ENCODE measurements at regions of chr1 and their contacts with region 1.

Region 1: DNA sequence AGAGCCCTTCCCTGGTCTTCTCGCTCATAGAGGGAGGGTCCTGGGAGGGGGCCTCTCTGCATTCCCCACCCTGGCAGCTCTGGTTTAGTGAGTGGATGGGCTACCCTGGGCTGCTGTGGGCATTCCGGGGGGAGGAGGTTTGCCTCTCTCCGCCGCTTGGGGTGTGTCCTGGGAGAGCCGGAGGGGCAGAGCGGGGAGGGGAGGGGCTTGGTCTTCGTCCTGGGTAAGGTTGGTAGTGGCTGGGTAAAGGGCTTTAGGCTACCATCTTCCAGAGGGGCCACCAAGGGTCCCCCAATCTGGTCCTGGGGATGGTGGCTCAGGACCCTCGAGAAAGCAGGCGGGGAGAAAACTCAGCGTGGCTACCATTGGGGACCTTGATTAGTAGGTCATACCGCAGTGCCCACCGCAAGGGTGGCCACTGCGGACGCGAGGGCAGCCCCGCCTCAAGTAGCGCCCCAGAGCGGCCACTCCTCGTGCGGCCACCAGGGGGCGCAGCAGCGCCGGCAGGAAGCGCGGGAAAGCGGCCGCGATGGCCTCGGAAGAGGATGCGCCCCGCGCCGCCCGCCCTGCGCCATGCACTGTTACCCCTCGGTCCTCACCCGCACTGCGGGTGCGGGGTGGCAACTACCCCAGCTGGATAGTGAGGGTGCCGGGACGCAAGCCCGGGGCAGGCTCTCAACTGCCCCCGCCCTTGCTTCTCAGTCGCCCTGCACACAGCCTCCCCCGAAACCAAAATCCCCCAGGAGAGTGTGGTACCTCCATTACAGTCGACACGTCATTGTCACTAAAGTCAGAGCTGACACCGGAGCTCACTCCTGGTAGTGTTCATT is 44.1 kb upstream of the SLC25A33 start:
- DNase-seq: peak; percentile 92
- H3K4me3 Mint-ChIP-seq: peak overlapping the region; percentile 77
- H3K27ac Mint-ChIP-seq: no peak overlapping the region
- H3K4me1 Mint-ChIP-seq: peaks cover 10% of the 10 kb centered on the region
- H3K27me3 Mint-ChIP-seq: peaks cover 11% of the 10 kb centered on the region

Region 2: DNA sequence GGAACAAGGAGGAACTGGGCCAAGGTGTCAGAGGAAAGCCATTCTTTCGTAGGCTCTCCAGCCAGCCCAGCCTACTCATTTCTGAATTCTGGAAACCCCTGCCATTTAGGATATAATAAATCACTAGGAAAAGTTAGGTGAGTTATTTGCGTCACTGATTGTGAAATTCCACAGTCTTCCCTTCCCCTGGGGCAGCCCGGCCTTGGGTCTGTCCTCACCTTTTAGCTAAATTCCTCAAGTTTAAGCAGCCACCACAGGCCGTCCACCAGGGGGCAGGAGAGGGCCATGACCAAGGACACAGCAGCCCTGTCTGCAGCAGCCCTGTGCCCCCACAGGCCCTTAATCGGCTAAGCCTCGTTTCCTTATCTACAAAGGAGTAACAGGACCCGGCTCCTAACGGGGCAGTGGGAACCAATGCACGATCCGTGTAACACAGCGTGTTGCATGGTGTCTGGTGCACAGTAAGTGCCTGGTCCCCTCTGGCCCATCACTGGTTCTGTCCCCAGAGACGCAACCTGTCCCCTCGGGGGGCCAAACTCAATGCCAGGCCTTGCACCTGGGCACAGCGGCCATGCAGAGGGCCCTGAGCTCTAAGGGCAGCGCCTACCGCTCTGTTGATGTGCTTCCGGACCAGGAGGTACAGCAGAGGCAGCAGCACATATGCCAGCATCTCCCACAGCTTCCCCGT is 384.3 kb before region 1 on chr1:
- intact Hi-C with region 1: loop called (anchors 2 kb)
- DNase-seq: peak; percentile 95
- H3K4me3 Mint-ChIP-seq: no peak overlapping the region
- H3K27ac Mint-ChIP-seq: no peak overlapping the region
- H3K4me1 Mint-ChIP-seq: peaks cover 18% of the 10 kb centered on the region
- H3K27me3 Mint-ChIP-seq: no peaks in the 10 kb centered on the region

Region 3: GRCh38 chr1:9269078-9269501 is 226.1 kb before region 1 on chr1:
- intact Hi-C with region 1: loop called (anchors 1 kb)
- DNase-seq: no peak
- H3K4me3 Mint-ChIP-seq: no peak overlapping the region
- H3K27ac Mint-ChIP-seq: no peak overlapping the region
- H3K4me1 Mint-ChIP-seq: peaks cover 10% of the 10 kb centered on the region
- H3K27me3 Mint-ChIP-seq: no peaks in the 10 kb centered on the region

Region 4: DNA sequence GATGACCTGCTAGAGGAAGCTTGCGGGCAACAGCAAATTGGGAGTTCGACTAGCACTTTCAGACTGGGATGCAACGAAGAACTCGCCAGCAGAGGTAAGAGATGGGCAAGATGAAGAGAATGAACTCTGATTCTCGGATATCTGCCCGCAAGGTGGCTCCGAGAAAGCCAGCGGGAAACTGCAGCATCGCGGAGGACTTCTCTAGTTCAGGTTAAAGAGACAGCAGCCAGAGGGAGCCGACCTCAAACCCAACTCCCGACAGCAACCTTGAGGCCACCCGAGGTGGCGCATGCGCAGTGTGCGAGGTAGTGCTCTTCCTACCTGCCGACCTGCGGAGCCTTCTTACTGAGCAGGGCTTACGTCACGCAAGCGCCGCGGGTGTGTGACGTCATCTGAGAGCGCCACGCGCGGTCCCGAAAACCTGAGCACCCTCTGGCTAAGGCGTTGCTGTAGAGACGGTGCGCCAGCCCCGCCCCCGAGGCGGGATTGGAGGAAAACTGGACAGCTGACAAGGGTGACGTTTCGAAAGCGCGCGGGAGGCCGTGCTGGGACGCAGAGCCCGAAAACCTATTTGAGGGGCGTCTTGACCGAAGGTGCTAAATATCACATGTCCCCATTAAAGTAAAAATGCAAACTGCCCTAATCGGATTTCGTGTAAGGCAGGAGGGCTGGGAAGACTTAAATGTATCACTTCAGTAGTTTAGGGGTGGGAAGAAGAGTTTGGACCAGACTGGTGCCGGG is 66.4 kb before region 1 on chr1:
- intact Hi-C with region 1: no loop called
- DNase-seq: peak; percentile 100
- H3K4me3 Mint-ChIP-seq: peak overlapping the region; percentile 97
- H3K27ac Mint-ChIP-seq: peak overlapping the region; percentile 97
- H3K4me1 Mint-ChIP-seq: peaks cover 45% of the 10 kb centered on the region
- H3K27me3 Mint-ChIP-seq: peaks cover 13% of the 10 kb centered on the region

Region 5: DNA sequence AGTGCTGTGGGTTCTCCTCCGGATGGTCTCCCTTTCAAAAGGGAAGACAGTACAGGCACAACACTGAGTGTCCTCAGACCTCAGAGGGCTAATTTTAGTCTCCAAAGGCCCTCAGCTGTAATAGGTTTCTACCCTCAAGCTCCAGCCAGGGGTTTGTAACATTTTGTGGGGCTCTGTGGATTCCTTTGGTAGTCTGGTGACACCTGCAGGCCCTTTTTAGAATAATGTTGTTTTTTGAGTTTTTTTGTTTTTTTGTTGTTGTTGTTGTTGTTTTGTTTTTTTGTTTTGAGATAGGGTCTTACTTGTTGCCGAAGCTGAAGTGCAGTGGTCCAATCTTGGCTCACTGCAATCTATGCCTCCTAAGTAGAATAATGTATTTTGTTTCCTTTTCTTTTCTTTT is 78.6 kb after region 1 on chr1:
- intact Hi-C with region 1: loop called (anchors 1 kb)
- DNase-seq: no peak
- H3K4me3 Mint-ChIP-seq: no peak overlapping the region
- H3K27ac Mint-ChIP-seq: no peak overlapping the region
- H3K4me1 Mint-ChIP-seq: no peaks in the 10 kb centered on the region
- H3K27me3 Mint-ChIP-seq: no peaks in the 10 kb centered on the region

Region 6: DNA sequence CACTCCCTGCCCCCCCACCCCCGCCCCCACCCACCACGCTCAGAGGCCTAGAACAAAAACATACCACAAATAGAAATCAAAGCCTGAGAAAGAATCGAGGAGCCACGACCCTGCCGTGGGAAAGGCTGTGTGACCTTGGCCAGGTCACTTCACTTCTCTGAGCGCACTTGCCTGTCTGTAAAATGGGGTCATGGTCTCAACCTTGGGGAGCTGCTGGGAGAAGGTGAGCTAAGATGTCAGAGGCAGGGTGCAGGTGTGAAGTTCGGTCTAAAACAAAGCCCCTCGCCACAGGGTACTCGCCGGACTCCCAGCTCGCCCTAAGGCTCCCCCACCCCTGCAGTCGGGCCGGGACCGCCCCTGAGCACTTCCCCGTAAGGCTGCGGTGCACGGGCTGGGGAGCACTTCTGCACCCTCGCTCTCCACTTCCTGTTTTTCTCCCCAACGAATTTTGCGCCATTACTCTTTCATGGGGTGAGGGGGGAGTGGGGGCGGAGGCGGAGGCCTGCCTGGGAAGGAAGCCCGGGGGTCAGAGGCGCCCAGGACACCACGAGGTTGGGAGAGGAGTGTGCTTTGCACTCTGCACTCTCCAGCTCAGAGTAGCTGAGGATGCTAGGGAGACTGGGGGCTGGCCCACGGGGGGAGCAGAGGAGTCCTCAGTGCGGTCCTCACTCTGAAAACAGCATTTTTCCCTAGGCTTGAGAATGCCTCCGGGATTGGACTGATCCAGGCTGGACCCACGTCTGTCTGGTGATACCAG is 134.5 kb after region 1 on chr1:
- intact Hi-C with region 1: no loop called
- DNase-seq: peak; percentile 95
- H3K4me3 Mint-ChIP-seq: peak overlapping the region; percentile 95
- H3K27ac Mint-ChIP-seq: peak overlapping the region; percentile 93
- H3K4me1 Mint-ChIP-seq: peaks cover 52% of the 10 kb centered on the region
- H3K27me3 Mint-ChIP-seq: no peaks in the 10 kb centered on the region

Region 7: GRCh38 chr1:9867408-9868243 is 372.5 kb after region 1 on chr1:
- intact Hi-C with region 1: loop called (anchors 10 kb)
- DNase-seq: peak; percentile 96
- H3K4me3 Mint-ChIP-seq: no peak overlapping the region
- H3K27ac Mint-ChIP-seq: no peak overlapping the region
- H3K4me1 Mint-ChIP-seq: peaks cover 4% of the 10 kb centered on the region
- H3K27me3 Mint-ChIP-seq: peaks cover 2% of the 10 kb centered on the region